Brain microvascular endothelial cell (primary cell): ENCODE measurements at regions of chr2 and their contacts with region 1.

Region 1: GRCh38 chr2:241087420-241088268 is 14.4 kb downstream of the MTERF4 start:
- DNase-seq: no peak
- H3K4me3 ChIP-seq: no peak overlapping the region
- H3K27ac ChIP-seq: no peak overlapping the region
- H3K27me3 ChIP-seq: no peaks in the 10 kb centered on the region
- CTCF ChIP-seq: no peak

Region 2: DNA sequence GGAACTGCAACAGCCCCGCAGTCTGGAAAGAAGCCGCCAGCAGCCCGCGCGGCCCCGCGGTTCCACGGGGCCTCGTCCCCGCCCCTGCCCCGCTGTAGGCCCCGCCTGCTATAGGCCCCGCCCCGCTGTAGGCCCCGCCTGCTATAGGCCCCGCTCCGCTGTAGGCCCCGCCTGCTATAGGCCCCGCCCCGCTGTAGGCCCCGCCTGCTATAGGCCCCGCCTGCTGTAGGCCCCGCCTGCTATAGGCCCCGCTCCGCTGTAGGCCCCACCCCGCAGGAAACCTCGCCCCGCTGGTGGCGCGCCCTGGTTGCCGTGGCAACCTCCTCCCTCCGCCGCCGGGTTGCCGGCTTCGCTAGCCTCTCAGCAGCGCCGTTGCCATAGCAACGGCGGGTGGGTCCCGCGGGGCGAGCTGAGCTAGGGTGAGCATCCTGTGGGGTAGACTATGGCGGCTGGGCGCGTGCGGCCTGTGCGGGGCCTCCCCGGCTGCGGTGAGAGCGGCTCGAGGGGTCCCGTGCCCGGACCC is 255.4 kb before region 1 on chr2:
- in situ Hi-C with region 1: loop called (anchors 25 kb)
- DNase-seq: peak; percentile 86
- H3K4me3 ChIP-seq: peak overlapping the region; percentile 9
- H3K27ac ChIP-seq: no peak overlapping the region
- H3K27me3 ChIP-seq: peaks cover 10% of the 10 kb centered on the region
- CTCF ChIP-seq: no peak